ENCODE measurements at regions of chr7 and their contacts with region 1.

Region 1: GRCh38 chr7:142711746-142712619 is 37.3 kb upstream of the PRSS1 start:
- DNase-seq: peak; percentile 68
- H3K4me3 Mint-ChIP-seq: peak overlapping the region; percentile 84
- H3K27ac Mint-ChIP-seq: peak overlapping the region; percentile 81
- H3K4me1 Mint-ChIP-seq: peaks cover 45% of the 10 kb centered on the region
- H3K27me3 Mint-ChIP-seq: no peaks in the 10 kb centered on the region

Region 2: DNA sequence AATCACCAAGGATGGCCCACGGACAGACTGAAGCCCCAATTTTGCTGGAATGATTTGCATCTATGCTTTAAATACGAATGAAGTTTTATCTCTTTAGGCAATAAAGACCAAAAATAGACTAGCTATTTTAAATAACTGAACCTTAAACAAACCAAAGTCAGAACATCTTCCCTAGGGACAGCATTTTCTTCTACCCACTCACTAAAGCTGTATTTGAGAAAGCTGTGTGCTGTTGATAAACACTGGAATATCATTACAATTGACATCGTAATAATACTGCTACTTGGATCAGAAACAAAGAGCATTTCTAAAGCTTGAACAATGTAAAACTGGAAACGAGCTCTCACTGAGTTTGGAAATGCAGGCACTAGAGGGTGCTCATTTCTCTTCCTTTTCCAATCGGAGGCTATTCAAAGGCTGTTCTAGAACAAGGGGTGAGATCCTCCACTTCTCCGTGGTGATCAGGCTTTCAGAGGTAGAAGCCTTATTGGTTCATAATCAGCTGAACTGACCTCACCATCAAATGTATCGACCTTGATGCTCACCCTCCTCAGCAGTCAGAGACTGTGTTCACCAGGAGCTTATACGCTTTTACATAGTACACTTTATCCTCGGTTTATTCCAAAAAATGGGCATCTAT is 188.0 kb before region 1 on chr7:
- intact Hi-C with region 1: no loop called
- DNase-seq: no peak
- H3K4me3 Mint-ChIP-seq: no peak overlapping the region
- H3K27ac Mint-ChIP-seq: no peak overlapping the region
- H3K4me1 Mint-ChIP-seq: peaks cover 13% of the 10 kb centered on the region
- H3K27me3 Mint-ChIP-seq: peaks cover 16% of the 10 kb centered on the region

Region 3: DNA sequence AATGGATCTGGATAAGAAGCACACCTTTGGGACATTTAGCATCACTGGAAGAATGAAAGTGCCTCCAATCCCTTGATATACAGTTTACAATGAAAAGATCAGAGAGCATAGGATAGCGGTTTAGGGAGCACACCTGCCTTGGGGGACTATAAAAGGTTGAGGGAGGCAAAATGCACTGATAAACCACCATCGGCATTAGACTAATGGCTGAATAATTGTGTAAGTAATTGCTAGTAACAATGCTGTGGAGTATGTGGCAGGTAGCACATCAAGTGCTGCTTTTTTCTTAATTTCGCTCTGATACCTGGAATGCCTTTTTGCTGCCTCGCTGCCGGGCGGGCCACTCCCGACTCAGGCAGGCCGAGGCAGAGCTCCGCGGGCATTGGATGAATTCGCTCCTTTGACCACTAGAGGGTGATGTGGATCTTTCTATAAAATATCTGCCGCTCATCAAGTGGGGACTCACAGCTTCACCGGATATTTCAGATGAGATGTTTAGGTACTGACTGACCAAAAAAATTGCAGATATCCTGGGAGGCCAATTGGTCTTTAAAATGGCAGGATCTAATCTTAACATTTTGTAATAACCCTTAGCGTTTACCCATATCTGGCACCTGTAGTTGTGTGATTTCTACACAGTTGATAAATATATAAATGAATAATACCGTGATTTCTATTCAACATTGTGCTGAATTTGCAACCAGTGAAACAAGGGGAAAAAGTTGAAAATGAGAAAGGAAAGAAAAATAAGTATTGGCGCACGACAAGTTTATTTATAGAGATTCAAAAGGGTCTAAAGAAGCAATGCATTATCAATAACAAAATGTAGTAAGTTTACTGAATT is 79.5 kb before region 1 on chr7:
- intact Hi-C with region 1: loop called (anchors 5 kb)
- DNase-seq: peak; percentile 86
- H3K4me3 Mint-ChIP-seq: no peak overlapping the region
- H3K27ac Mint-ChIP-seq: no peak overlapping the region
- H3K4me1 Mint-ChIP-seq: peaks cover 13% of the 10 kb centered on the region
- H3K27me3 Mint-ChIP-seq: peaks cover 12% of the 10 kb centered on the region

Region 4: GRCh38 chr7:142698429-142698828 is 13.6 kb before region 1 on chr7:
- intact Hi-C with region 1: loop called (anchors 2 kb)
- DNase-seq: no peak
- H3K4me3 Mint-ChIP-seq: no peak overlapping the region
- H3K27ac Mint-ChIP-seq: no peak overlapping the region
- H3K4me1 Mint-ChIP-seq: peaks cover 17% of the 10 kb centered on the region
- H3K27me3 Mint-ChIP-seq: no peaks in the 10 kb centered on the region

Region 5: GRCh38 chr7:142801601-142802295 is 89.8 kb after region 1 on chr7:
- intact Hi-C with region 1: no loop called
- DNase-seq: peak; percentile 65
- H3K4me3 Mint-ChIP-seq: peak overlapping the region; percentile 100
- H3K27ac Mint-ChIP-seq: peak overlapping the region; percentile 99
- H3K4me1 Mint-ChIP-seq: peaks cover 81% of the 10 kb centered on the region
- H3K27me3 Mint-ChIP-seq: no peaks in the 10 kb centered on the region

Measured in activated CD4-positive, alpha-beta T cell treated with anti-CD3 and anti-CD28 coated beads, Interleukin-2, amount 10 ng/mL, durations not matched to agents 24 days and 14 days (primary cell).